WTC11 (cell line): ENCODE measurements at regions of chr3 and their contacts with region 1.

Region 1: GRCh38 chr3:190321789-190322603 is at the start of gene CLDN1:
- DNase-seq: peak; percentile 92
- ATAC-seq: peak; percentile 90
- H3K4me3 Mint-ChIP-seq: peak within 1 kb of the TSS; percentile 84
- H3K27ac Mint-ChIP-seq: peak within 1 kb of the TSS; percentile 58; the same call in 1 of the 2 replicates
- H3K4me1 Mint-ChIP-seq: peaks cover 57% of the 10 kb centered on the region
- H3K27me3 Mint-ChIP-seq: peaks cover 18% of the 10 kb centered on the region
- CTCF ChIP-seq: peak; percentile 94
- total RNA-seq, gene CLDN1: 4.4 to 5.9 TPM (median 5.7 TPM) in 3 replicates

Region 2: DNA sequence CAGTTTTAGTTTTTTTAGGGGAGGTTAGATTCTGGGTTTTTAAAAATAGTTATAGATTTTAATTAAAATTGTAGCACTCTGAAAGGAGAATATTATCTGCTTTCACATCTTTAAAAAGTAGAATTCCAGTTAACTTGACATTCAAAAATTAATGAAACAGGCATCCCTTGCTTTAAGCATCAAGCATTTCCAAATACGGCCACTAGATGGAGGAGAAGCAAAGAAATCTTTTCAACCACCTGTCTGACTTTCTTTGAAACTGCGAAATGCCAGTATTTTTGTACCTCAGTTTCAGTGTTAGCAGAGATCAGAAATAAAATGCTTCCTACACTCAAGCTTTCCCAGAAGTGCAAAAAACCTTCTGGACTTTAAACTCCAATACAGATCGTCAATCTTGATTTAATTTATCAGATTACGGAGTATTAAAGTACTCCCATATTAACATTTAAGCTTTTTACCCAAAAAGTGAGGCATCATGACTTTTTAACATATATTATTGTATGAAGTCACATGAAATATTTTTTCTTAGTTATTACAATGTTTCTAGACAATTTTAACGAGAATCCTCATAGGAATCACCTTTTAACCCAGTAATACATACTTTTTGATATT is 354.6 kb before region 1 on chr3:
- CTCF ChIA-PET with region 1: interaction called, 77 read pairs
- POLR2A ChIA-PET with region 1: interaction called, 9 read pairs
- DNase-seq: no peak
- ATAC-seq: peak; percentile 34; the same call in 1 of the 2 replicates
- H3K4me3 Mint-ChIP-seq: no peak overlapping the region
- H3K27ac Mint-ChIP-seq: no peak overlapping the region; the same call in 1 of the 2 replicates
- H3K4me1 Mint-ChIP-seq: peaks cover 17% of the 10 kb centered on the region
- H3K27me3 Mint-ChIP-seq: no peaks in the 10 kb centered on the region
- CTCF ChIP-seq: peak; percentile 85

Region 3: DNA sequence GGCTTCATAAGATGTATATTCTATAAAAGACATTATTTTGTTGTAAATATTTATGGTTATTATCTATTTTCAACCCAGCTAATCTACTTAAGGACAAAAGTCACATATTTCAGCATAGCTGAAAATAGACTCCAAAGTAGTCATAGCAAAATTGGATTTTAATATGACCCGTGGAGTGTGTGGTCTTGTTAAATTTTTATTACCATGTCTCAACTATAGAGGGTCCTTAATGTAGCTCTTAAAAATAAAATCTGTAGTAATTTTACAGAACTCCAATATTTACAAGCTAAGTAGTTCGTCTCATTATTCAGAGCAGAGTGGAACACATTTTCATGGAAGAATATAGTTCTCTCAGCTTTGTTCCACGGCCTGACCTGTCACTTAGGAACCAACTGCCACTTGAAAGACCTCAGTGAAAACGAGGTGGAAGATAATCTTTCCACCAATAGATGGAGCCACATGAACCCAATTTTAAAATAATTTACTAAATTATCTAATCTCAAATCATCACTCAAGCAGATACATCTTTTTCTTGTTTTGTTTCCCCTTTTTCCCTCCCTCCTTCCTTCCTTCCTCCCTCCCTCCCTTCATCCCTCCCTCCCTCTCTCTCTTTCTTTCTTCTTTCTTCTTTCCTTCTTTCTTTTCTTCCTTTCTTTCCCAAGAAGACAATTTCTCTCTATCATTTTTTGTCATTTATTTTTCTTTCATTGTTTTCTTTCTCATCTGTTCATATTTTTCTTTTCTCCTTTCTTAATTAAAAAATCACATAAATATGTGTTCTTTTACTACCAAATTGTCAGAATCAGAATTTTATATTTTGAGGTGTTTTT is 96.9 kb before region 1 on chr3:
- CTCF ChIA-PET with region 1: interaction called, 26 read pairs
- POLR2A ChIA-PET with region 1: no interaction called
- DNase-seq: no peak
- ATAC-seq: peak; percentile 58; the same call in 1 of the 2 replicates
- H3K4me3 Mint-ChIP-seq: no peak overlapping the region
- H3K27ac Mint-ChIP-seq: no peak overlapping the region
- H3K4me1 Mint-ChIP-seq: peaks cover 5% of the 10 kb centered on the region; the same call in 1 of the 2 replicates
- H3K27me3 Mint-ChIP-seq: no peaks in the 10 kb centered on the region; the same call in 1 of the 2 replicates
- CTCF ChIP-seq: no peak

Region 4: DNA sequence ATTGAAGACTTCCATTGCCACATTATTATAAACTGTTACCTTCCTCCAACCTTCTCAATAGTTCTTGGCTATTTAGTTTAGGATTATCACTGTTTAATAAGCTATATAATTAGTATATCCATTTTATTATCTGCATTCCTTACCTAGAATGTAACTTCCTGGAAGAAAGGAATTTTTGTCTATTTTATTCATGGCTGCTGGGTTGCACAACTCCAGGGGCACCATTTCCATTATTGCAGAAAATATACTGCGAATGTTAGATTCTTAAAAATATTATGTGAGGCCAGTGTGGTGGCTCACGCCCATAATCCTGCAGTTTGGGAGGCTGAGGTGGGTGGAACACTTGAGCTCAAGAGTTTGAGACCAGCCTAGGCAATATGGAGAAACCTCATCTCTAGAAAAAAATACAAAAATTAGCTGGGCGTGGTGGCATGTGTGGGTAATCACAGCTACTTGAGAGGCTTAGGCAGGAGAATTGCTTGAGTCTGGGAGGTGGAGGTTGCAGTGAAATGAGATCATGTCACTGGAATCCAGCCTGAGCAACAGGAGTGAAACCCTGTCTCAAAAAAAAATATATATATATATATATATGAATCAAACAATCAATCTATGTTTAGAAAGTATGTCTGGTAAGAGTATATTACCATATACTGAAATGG is 19.7 kb before region 1 on chr3:
- CTCF ChIA-PET with region 1: interaction called, 14 read pairs
- POLR2A ChIA-PET with region 1: no interaction called
- DNase-seq: no peak
- ATAC-seq: no peak
- H3K4me3 Mint-ChIP-seq: no peak overlapping the region
- H3K27ac Mint-ChIP-seq: no peak overlapping the region
- H3K4me1 Mint-ChIP-seq: no peaks in the 10 kb centered on the region
- H3K27me3 Mint-ChIP-seq: no peaks in the 10 kb centered on the region
- CTCF ChIP-seq: no peak

Region 5: GRCh38 chr3:190384241-190384863 is 62.4 kb after region 1 on chr3:
- CTCF ChIA-PET with region 1: interaction called, 16 read pairs
- POLR2A ChIA-PET with region 1: no interaction called
- DNase-seq: no peak
- ATAC-seq: peak; percentile 93
- H3K4me3 Mint-ChIP-seq: no peak overlapping the region
- H3K27ac Mint-ChIP-seq: no peak overlapping the region
- H3K4me1 Mint-ChIP-seq: peaks cover 11% of the 10 kb centered on the region
- H3K27me3 Mint-ChIP-seq: no peaks in the 10 kb centered on the region
- CTCF ChIP-seq: no peak

Region 6: DNA sequence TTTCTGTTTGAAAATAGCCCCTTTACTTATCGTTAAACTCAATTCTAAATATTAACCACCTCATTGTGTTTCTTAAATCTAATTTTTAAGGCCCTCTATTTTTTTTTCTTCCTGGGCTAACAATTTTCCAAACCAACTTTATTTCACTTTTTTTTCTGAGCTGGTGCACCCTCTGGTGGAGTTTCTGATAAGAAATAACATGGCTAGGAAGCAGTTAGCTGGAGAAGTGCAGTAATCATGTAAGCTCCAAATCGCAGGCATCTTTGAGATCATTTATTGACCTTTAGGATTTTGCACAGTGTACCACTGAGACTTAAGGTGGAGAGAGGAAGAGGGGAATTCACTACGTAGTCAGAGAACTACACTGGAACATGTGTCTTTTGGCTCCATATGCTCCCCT is 121.3 kb after region 1 on chr3:
- CTCF ChIA-PET with region 1: interaction called, 15 read pairs
- POLR2A ChIA-PET with region 1: no interaction called
- DNase-seq: no peak
- ATAC-seq: peak; percentile 34; the same call in 1 of the 2 replicates
- H3K4me3 Mint-ChIP-seq: no peak overlapping the region
- H3K27ac Mint-ChIP-seq: no peak overlapping the region
- H3K4me1 Mint-ChIP-seq: no peaks in the 10 kb centered on the region
- H3K27me3 Mint-ChIP-seq: no peaks in the 10 kb centered on the region
- CTCF ChIP-seq: no peak